ENCODE measurements at regions of chrX and their contacts with region 1.

Region 1: GRCh38 chrX:17046478-17047097 is 100.1 kb downstream of the REPS2 start:
- DNase-seq: peak; percentile 80
- H3K4me3 Mint-ChIP-seq: no peak overlapping the region
- H3K27ac Mint-ChIP-seq: peak overlapping the region; percentile 32
- H3K4me1 Mint-ChIP-seq: peaks cover 5% of the 10 kb centered on the region
- H3K27me3 Mint-ChIP-seq: peaks cover 74% of the 10 kb centered on the region
- CTCF ChIP-seq: peak; percentile 87

Region 2: GRCh38 chrX:16014181-16014580 is 1032.4 kb before region 1 on chrX:
- CTCF ChIA-PET with region 1: no interaction called
- POLR2A ChIA-PET with region 1: no interaction called
- intact Hi-C with region 1: no loop called
- DNase-seq: no peak
- H3K4me3 Mint-ChIP-seq: no peak overlapping the region
- H3K27ac Mint-ChIP-seq: no peak overlapping the region
- H3K4me1 Mint-ChIP-seq: no peaks in the 10 kb centered on the region
- H3K27me3 Mint-ChIP-seq: peaks cover 53% of the 10 kb centered on the region
- CTCF ChIP-seq: no peak

Region 3: GRCh38 chrX:16826207-16826606 is 220.4 kb before region 1 on chrX:
- CTCF ChIA-PET with region 1: interaction called, 87 read pairs
- POLR2A ChIA-PET with region 1: interaction called, 5 read pairs
- intact Hi-C with region 1: loop called (anchors 1 kb)
- DNase-seq: peak; percentile 56
- H3K4me3 Mint-ChIP-seq: no peak overlapping the region
- H3K27ac Mint-ChIP-seq: no peak overlapping the region
- H3K4me1 Mint-ChIP-seq: peaks cover 15% of the 10 kb centered on the region
- H3K27me3 Mint-ChIP-seq: no peaks in the 10 kb centered on the region
- CTCF ChIP-seq: peak; percentile 60

Region 4: DNA sequence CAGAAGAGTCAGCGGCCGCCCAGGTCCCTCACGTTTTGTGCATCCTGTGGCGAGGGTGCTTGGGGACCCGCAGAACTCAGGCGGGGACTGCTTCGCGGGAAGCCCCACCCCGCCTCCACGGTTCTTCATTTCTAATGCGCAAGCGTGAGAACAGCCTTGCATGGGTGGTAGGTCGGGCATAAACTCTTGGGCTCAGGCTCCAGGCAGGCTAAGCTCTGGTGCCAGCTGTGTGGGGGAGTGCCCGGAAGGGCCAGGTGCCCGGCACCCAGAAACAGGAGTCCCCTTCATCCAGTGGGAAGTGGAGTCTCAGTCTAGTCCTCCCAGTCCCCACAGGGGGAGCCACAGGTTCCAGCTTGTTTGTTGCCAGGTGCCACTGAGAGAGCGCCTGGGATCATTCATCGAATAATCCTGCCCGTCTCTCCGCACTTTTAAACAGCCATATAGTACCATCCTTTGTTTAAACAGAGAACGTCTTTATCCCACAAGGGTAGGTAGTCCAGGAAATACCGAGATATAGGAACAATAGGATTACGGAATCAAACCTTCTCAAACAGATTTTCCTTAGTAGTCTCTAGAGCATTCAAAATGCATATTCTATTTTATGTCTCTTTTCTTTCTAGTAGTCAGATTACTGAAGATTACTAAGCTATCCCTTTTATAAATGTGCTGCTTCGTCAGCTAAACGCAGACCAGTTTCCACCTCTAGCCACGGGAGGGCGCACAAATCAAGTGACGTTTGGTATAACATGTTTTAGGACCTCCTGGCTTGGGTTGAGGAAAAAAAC is 163.7 kb before region 1 on chrX:
- CTCF ChIA-PET with region 1: interaction called, 252 read pairs
- POLR2A ChIA-PET with region 1: interaction called, 11 read pairs
- intact Hi-C with region 1: loop called (anchors 1 kb)
- DNase-seq: peak; percentile 72
- H3K4me3 Mint-ChIP-seq: peak overlapping the region; percentile 73
- H3K27ac Mint-ChIP-seq: peak overlapping the region; percentile 27
- H3K4me1 Mint-ChIP-seq: no peaks in the 10 kb centered on the region
- H3K27me3 Mint-ChIP-seq: peaks cover 69% of the 10 kb centered on the region
- CTCF ChIP-seq: peak; percentile 51

Region 5: DNA sequence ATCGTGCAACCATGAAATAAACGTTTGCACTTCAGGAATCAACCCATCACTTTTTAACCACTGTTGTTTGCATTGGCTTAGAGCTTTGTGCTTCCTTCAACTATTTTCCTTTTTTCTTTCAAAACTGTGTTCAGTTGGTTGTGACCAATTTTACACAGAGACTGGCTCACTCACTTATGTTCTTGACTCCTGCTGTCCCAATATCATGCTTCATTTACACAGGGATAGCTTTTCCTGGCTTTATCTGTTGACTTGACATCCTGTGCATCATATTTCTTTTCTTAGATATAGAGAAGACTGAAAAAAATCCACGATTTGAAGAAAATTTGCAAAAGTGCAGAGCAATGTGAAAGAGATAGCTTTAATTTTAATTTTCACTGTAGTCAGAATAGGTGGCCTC is 61.3 kb before region 1 on chrX:
- CTCF ChIA-PET with region 1: interaction called, 10 read pairs
- POLR2A ChIA-PET with region 1: no interaction called
- intact Hi-C with region 1: no loop called
- DNase-seq: no peak
- H3K4me3 Mint-ChIP-seq: no peak overlapping the region
- H3K27ac Mint-ChIP-seq: no peak overlapping the region
- H3K4me1 Mint-ChIP-seq: no peaks in the 10 kb centered on the region
- H3K27me3 Mint-ChIP-seq: peaks cover 83% of the 10 kb centered on the region
- CTCF ChIP-seq: no peak

Region 6: DNA sequence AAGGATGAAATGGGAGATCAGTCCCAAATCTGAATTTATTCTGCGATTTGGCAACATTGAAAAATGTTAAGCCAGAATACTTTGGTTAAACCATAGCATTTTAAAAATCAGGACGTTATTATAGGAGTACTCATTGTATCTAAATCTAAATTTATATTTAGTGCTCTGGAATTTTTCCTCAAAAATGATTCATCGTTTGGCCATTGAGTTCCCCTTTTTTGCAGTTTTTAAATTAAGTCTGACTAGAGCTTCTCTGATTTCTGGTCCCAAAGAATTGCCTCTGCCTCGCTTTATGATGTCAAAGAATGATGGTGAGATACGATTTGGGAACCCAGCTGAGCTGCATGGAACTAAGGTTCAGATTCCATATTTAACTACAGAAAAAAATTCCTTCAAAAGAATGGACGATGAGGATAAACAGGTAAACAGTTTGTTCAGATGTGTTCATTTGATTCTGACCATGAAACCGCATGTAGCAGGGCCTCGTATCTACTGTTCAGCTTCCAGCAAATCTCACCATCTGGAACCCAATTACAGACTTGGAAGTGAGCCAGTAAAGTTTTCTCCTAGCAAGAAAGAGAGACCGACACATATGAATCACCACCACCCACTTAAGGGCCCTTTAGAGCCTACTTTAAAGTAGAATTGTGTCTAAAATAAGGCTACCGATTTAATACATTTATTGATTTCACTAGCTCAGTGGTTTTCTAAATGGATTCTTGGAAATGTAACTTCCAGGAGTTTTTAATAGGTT is 24.6 kb before region 1 on chrX:
- CTCF ChIA-PET with region 1: interaction called, 41 read pairs
- POLR2A ChIA-PET with region 1: interaction called, 3 read pairs
- intact Hi-C with region 1: no loop called
- DNase-seq: peak; percentile 63
- H3K4me3 Mint-ChIP-seq: no peak overlapping the region
- H3K27ac Mint-ChIP-seq: no peak overlapping the region
- H3K4me1 Mint-ChIP-seq: peaks cover under 1% of the 10 kb centered on the region
- H3K27me3 Mint-ChIP-seq: peaks cover 61% of the 10 kb centered on the region
- CTCF ChIP-seq: no peak

Region 7: DNA sequence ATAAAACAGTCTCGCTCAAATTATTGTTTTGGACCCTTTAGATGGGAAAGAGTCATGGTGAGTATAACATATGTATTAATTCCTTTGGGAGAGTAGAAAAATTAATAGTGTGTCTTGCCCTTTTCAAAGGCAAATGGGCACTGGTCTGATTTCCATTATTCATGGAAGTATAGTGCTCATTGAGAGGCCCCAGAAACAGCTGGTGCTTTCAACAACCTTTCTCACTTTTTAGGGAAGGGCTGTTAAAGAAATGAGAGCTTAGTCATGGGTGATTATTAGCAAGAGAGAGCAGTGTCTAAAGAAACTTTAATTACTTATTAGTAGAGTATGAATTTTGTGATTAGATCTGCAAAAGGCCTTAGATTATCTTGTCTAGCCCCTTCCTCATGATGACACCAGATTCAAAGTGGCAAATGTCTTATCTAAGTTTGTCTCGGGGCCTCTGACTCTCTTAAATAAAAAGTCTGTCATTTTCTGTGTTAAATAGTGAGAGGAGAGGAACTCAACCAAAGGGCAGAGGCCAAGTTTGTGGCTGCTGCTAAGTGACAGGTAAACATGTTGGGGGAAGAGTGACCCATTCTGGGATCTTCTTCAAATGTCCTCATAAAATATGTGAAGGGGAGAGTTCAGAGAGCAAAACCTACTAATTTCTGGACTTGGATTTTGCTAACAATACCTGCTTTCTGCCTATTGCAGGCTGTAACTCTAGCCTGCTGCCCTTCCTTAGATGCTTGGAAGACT is 10.4 kb after region 1 on chrX:
- CTCF ChIA-PET with region 1: interaction called, 23 read pairs
- POLR2A ChIA-PET with region 1: no interaction called
- intact Hi-C with region 1: no loop called
- DNase-seq: no peak
- H3K4me3 Mint-ChIP-seq: no peak overlapping the region
- H3K27ac Mint-ChIP-seq: no peak overlapping the region
- H3K4me1 Mint-ChIP-seq: no peaks in the 10 kb centered on the region
- H3K27me3 Mint-ChIP-seq: peaks cover 14% of the 10 kb centered on the region
- CTCF ChIP-seq: no peak

Region 8: DNA sequence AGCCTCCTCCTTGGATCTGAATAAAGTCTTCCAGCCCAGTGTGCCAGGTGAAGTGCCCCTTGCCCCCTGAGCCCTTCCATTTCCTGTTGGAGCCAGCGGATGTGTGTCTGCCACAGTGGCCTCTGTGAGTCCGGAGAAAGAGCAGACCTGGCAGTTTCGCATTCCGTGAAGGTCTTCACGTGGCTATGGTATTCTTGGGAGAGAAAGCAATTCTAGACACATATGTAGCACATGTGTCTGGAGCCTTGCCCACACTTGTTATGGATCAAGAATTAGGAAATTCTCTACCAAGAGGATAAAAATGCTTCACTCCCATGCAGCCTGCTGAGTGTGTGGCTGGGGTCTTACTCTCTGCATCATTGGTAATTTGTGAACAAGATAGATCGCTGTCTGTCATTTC is 30.8 kb after region 1 on chrX:
- CTCF ChIA-PET with region 1: interaction called, 12 read pairs
- POLR2A ChIA-PET with region 1: no interaction called
- intact Hi-C with region 1: loop called (anchors 2 kb)
- DNase-seq: no peak
- H3K4me3 Mint-ChIP-seq: no peak overlapping the region
- H3K27ac Mint-ChIP-seq: no peak overlapping the region
- H3K4me1 Mint-ChIP-seq: no peaks in the 10 kb centered on the region
- H3K27me3 Mint-ChIP-seq: peaks cover 89% of the 10 kb centered on the region
- CTCF ChIP-seq: no peak

Region 9: DNA sequence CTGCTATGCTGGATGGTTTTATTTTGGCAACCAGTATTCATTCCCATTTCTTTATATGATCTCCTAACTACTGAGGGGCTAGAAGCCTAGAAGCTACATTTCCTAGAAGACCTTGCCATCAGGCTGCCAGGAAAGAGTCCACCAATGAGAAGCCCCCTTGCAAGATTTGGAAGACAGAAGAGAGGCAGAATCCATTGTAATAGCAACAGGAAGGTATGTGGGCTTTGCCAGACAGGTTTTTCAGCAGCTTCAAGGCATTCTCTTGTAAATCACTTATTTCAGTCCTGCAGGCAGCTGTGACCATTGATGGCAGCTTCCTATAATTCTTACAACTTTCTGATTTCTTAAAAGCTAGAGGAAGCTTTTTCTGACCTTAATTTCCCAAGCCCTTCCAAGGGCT is 180.1 kb after region 1 on chrX:
- CTCF ChIA-PET with region 1: no interaction called
- POLR2A ChIA-PET with region 1: no interaction called
- intact Hi-C with region 1: no loop called
- DNase-seq: no peak
- H3K4me3 Mint-ChIP-seq: no peak overlapping the region
- H3K27ac Mint-ChIP-seq: no peak overlapping the region
- H3K4me1 Mint-ChIP-seq: no peaks in the 10 kb centered on the region
- H3K27me3 Mint-ChIP-seq: peaks cover 47% of the 10 kb centered on the region
- CTCF ChIP-seq: no peak

Region 10: GRCh38 chrX:17262123-17262522 is 215.5 kb after region 1 on chrX:
- CTCF ChIA-PET with region 1: no interaction called
- POLR2A ChIA-PET with region 1: no interaction called
- intact Hi-C with region 1: no loop called
- DNase-seq: no peak
- H3K4me3 Mint-ChIP-seq: no peak overlapping the region
- H3K27ac Mint-ChIP-seq: no peak overlapping the region
- H3K4me1 Mint-ChIP-seq: no peaks in the 10 kb centered on the region
- H3K27me3 Mint-ChIP-seq: peaks cover 10% of the 10 kb centered on the region
- CTCF ChIP-seq: no peak

Region 11: DNA sequence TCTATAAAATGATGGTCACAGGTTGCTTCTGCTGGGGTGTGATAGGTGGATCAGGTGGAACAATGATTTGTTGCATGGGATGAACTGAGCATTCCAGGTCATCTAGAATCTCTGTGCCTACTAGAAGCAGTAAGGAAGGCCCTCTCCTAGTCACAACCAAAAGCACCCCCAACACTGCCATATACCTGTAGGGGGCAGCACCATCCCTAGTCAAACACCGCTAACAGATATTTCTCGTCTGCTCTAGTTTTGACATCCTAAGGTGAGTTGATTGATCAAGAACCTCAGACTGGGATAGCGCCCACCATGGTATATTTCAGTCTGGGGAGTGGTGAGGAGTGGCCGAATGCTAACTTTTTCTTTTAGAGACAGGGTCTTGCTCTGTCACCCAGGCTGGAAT is 488.6 kb after region 1 on chrX:
- CTCF ChIA-PET with region 1: no interaction called
- POLR2A ChIA-PET with region 1: no interaction called
- intact Hi-C with region 1: no loop called
- DNase-seq: peak; percentile 78
- H3K4me3 Mint-ChIP-seq: no peak overlapping the region
- H3K27ac Mint-ChIP-seq: no peak overlapping the region
- H3K4me1 Mint-ChIP-seq: no peaks in the 10 kb centered on the region
- H3K27me3 Mint-ChIP-seq: peaks cover 73% of the 10 kb centered on the region
- CTCF ChIP-seq: peak; percentile 42